ENCODE measurements at regions of chr1 and their contacts with region 1.

Region 1: DNA sequence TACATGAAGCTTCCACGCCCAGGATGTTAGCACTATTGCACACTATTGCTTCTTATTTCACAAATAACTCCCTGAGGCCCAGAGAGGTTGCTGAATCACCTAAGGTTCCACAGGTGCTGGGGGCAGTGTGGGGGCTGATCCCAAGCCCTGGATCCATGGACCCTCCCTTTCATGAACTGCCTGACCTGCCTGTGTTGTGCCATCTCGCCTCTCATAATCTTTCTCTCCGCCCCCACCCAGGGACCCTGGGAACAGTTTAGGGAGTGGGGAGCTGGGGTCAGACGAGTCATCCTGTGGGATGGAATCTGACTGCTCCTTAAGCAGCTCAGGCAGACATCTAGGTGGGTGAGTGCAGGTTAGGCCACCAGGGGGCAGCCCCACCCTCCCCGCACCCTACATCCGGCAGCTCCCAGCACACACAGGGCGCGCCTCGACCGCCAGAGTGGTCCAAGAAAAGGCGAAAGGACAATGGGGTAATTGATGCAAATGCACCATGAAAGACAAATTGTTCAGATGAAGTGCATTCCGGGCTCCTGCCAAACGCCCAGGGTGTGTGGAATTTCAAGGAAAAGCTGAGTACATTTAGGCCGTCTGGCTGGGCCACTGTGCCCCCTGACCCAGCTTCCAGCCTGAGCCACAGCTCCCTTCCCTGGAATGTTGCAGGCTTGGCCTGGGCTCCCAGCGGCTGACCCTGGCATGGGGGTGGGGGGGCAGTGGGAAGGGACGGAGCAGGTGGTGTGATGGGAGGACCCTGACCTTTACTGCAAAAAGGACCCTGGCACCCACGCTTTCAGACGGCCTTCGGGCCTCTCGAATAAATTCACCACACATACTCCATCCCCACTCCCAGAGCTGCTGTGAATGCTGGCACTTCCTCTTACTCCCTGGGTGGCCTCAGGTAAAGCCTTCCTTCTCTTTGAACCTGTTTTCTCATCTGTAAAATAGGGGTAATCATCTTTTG is 20.8 kb downstream of the PHLDA3 start:
- DNase-seq: peak; percentile 61 to 80
- ATAC-seq: peak; percentile 78 to 93
- H3K4me3 ChIP-seq: no peak overlapping the region
- H3K27ac ChIP-seq: peak overlapping the region; percentile 27 to 58 (median 46)
- H3K4me1 ChIP-seq: peaks cover 21 to 25% of the 10 kb centered on the region in 2 donors
- H3K27me3 ChIP-seq: no peaks in the 10 kb centered on the region
- CTCF ChIP-seq: peak; percentile 75 to 96 (median 95)
- POLR2A ChIP-seq: no peak

Region 2: GRCh38 chr1:201460814-201461657 is 12.8 kb after region 1 on chr1:
- in situ Hi-C with region 1: no loop called
- intact Hi-C with region 1: loop called (anchors 1 kb)
- DNase-seq: peak; percentile 84 to 90
- ATAC-seq: peak; percentile 71 to 77
- H3K4me3 ChIP-seq: peak overlapping the region in 3 of 4 donors; percentile 15 to 17 (median 15)
- H3K27ac ChIP-seq: peak overlapping the region; percentile 92 to 100 (median 100)
- H3K4me1 ChIP-seq: peaks cover 59 to 64% of the 10 kb centered on the region in 2 donors
- H3K27me3 ChIP-seq: no peaks in the 10 kb centered on the region
- CTCF ChIP-seq: no peak
- POLR2A ChIP-seq: peak in 1 of 2 donors; percentile 12

Region 3: GRCh38 chr1:201481761-201482493 is 33.7 kb after region 1 on chr1:
- in situ Hi-C with region 1: loop called in 2 of 4 experiments (anchors 5 kb)
- intact Hi-C with region 1: loop called (anchors 1 kb)
- DNase-seq: peak; percentile 56 to 78
- ATAC-seq: peak; percentile 38 to 68
- H3K4me3 ChIP-seq: peak overlapping the region; percentile 6 to 49 (median 38)
- H3K27ac ChIP-seq: peak overlapping the region in 3 of 4 donors; percentile 73 to 84 (median 82)
- H3K4me1 ChIP-seq: peaks cover 17 to 18% of the 10 kb centered on the region in 2 donors
- H3K27me3 ChIP-seq: no peaks in the 10 kb centered on the region
- CTCF ChIP-seq: peak; percentile 76 to 95 (median 91)
- POLR2A ChIP-seq: no peak

Region 4: GRCh38 chr1:201511941-201512539 is 63.8 kb after region 1 on chr1:
- in situ Hi-C with region 1: loop called (anchors 5 to 10 kb)
- intact Hi-C with region 1: loop called (anchors 1 kb)
- DNase-seq: peak in 1 of 2 donors; percentile 43
- ATAC-seq: peak; percentile 32 to 34
- H3K4me3 ChIP-seq: no peak overlapping the region
- H3K27ac ChIP-seq: peak overlapping the region; percentile 54 to 72 (median 68)
- H3K4me1 ChIP-seq: peaks cover 11 to 21% of the 10 kb centered on the region in 2 donors
- H3K27me3 ChIP-seq: no peaks in the 10 kb centered on the region
- CTCF ChIP-seq: no peak
- POLR2A ChIP-seq: no peak